Heart left ventricle (tissue), 16 donors: ENCODE measurements at regions of chr11 and their contacts with region 1.

Region 1: GRCh38 chr11:76799066-76799804 is 16.1 kb downstream of the TSKU start:
- DNase-seq: peak; percentile 88 to 93 (median 88)
- ATAC-seq: peak; percentile 62 to 93 (median 91)
- H3K4me3 ChIP-seq: peak overlapping the region in 10 of 12 donors; percentile 16 to 47 (median 42)
- H3K27ac ChIP-seq: peak overlapping the region in 6 of 12 donors; percentile 0 to 63 (median 26)
- H3K4me1 ChIP-seq: peaks cover 0 to 27% (median 9%) of the 10 kb centered on the region in 12 donors
- H3K27me3 ChIP-seq: no peaks in the 10 kb centered on the region
- CTCF ChIP-seq: peak in 11 of 12 donors; percentile 85 to 99 (median 95)
- POLR2A ChIP-seq: peak in 1 of 2 donors; percentile 37

Region 2: GRCh38 chr11:76734456-76735420 is 64.5 kb before region 1 on chr11:
- intact Hi-C with region 1: loop called (anchors 1 to 2 kb)
- DNase-seq: no peak
- ATAC-seq: no peak
- H3K4me3 ChIP-seq: no peak overlapping the region
- H3K27ac ChIP-seq: no peak overlapping the region
- H3K4me1 ChIP-seq: peaks cover 0 to 16% (median 1%) of the 10 kb centered on the region in 12 donors
- H3K27me3 ChIP-seq: no peaks in the 10 kb centered on the region
- CTCF ChIP-seq: no peak
- POLR2A ChIP-seq: no peak

Region 3: GRCh38 chr11:76763573-76764346 is 35.5 kb before region 1 on chr11:
- intact Hi-C with region 1: loop called in 1 of 10 experiments (anchors 2 kb)
- DNase-seq: peak in 4 of 5 donors; percentile 56 to 73 (median 59)
- ATAC-seq: peak in 3 of 4 donors; percentile 35 to 59 (median 56)
- H3K4me3 ChIP-seq: no peak overlapping the region
- H3K27ac ChIP-seq: peak overlapping the region in 2 of 12 donors; percentile 9 to 28
- H3K4me1 ChIP-seq: peaks cover 5 to 52% (median 41%) of the 10 kb centered on the region in 12 donors
- H3K27me3 ChIP-seq: no peaks in the 10 kb centered on the region
- CTCF ChIP-seq: no peak
- POLR2A ChIP-seq: no peak

Region 4: GRCh38 chr11:76838678-76839068 is 39.4 kb after region 1 on chr11:
- intact Hi-C with region 1: no loop called
- DNase-seq: peak in 2 of 5 donors; percentile 21 to 34
- ATAC-seq: peak in 3 of 4 donors; percentile 50 to 74 (median 64)
- H3K4me3 ChIP-seq: no peak overlapping the region
- H3K27ac ChIP-seq: peak overlapping the region in 8 of 12 donors; percentile 6 to 55 (median 29)
- H3K4me1 ChIP-seq: peaks cover 0 to 34% (median 16%) of the 10 kb centered on the region in 12 donors
- H3K27me3 ChIP-seq: no peaks in the 10 kb centered on the region
- CTCF ChIP-seq: peak in 9 of 12 donors; percentile 23 to 54 (median 36)
- POLR2A ChIP-seq: no peak

Region 5: DNA sequence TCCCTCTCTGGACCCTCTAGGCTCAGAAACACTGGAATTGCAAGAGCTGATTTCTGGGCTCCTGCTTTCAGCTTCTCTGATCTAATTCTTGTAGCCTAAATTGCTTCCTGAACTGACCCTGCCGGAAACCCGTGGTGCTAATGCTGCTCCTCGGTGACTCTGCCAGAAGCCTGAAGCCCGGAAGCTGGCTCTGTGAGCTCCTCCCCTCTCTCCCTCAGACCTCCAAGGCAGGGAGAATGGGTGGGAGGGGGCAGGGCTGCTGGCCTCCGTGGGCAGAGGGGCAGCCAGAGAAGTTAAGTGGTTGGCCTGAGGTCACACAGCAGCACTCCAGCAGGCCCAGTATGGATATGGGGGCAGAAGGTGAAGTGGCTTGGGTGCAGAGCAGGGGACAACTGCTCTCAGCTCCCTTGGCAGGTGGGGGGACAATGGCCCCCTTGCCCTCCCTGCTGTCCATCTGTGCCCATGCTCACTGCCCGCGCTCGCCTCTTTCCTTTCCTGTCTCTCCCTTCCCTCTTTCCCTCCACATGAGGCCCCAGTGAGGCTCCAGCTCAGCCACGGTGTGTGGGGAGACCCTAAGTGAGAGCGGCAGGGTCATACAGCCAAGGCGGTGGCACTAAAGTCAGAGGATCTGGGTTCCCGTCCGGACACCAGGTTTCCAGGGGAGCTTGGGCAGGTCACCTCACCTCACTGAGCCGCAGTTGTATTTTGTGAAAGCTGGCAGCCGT is 283.8 kb after region 1 on chr11:
- intact Hi-C with region 1: loop called in 1 of 10 experiments (anchors 10 kb)
- DNase-seq: peak; percentile 65 to 76 (median 70)
- ATAC-seq: peak; percentile 71 to 90 (median 82)
- H3K4me3 ChIP-seq: peak overlapping the region in 3 of 12 donors; percentile 6 to 23 (median 16)
- H3K27ac ChIP-seq: peak overlapping the region; percentile 8 to 82 (median 56)
- H3K4me1 ChIP-seq: peaks cover 0 to 27% (median 14%) of the 10 kb centered on the region in 12 donors
- H3K27me3 ChIP-seq: no peaks in the 10 kb centered on the region
- CTCF ChIP-seq: no peak
- POLR2A ChIP-seq: no peak